Endothelial cell of umbilical vein (primary cell): ENCODE measurements at regions of chr12 and their contacts with region 1.

Region 1: GRCh38 chr12:93019975-93020630 is 91.0 kb upstream of the EEA1 start:
- DNase-seq: peak; percentile 62
- H3K4me3 ChIP-seq: no peak overlapping the region
- H3K27ac ChIP-seq: peak overlapping the region; percentile 46
- H3K4me1 ChIP-seq: peaks cover 39% of the 10 kb centered on the region
- H3K27me3 ChIP-seq: no peaks in the 10 kb centered on the region
- CTCF ChIP-seq: no peak
- POLR2A ChIP-seq: no peak

Region 2: GRCh38 chr12:93002293-93003054 is 17.6 kb before region 1 on chr12:
- CTCF ChIA-PET with region 1: interaction called, 10 read pairs
- POLR2A ChIA-PET with region 1: no interaction called
- dilution Hi-C with region 1: no loop called
- intact Hi-C with region 1: loop called (anchors 1 kb)
- DNase-seq: peak; percentile 99
- H3K4me3 ChIP-seq: no peak overlapping the region
- H3K27ac ChIP-seq: peak overlapping the region; percentile 95
- H3K4me1 ChIP-seq: peaks cover 26% of the 10 kb centered on the region
- H3K27me3 ChIP-seq: no peaks in the 10 kb centered on the region
- CTCF ChIP-seq: no peak
- POLR2A ChIP-seq: no peak

Region 3: GRCh38 chr12:93089805-93090569 is 69.9 kb after region 1 on chr12:
- CTCF ChIA-PET with region 1: no interaction called
- POLR2A ChIA-PET with region 1: no interaction called
- dilution Hi-C with region 1: no loop called
- intact Hi-C with region 1: loop called (anchors 2 kb)
- DNase-seq: peak; percentile 92
- H3K4me3 ChIP-seq: no peak overlapping the region
- H3K27ac ChIP-seq: peak overlapping the region; percentile 83
- H3K4me1 ChIP-seq: peaks cover 41% of the 10 kb centered on the region
- H3K27me3 ChIP-seq: no peaks in the 10 kb centered on the region
- CTCF ChIP-seq: no peak
- POLR2A ChIP-seq: no peak